OCI-LY7 (cell line): ENCODE measurements at regions of chr12 and their contacts with region 1.

Region 1: DNA sequence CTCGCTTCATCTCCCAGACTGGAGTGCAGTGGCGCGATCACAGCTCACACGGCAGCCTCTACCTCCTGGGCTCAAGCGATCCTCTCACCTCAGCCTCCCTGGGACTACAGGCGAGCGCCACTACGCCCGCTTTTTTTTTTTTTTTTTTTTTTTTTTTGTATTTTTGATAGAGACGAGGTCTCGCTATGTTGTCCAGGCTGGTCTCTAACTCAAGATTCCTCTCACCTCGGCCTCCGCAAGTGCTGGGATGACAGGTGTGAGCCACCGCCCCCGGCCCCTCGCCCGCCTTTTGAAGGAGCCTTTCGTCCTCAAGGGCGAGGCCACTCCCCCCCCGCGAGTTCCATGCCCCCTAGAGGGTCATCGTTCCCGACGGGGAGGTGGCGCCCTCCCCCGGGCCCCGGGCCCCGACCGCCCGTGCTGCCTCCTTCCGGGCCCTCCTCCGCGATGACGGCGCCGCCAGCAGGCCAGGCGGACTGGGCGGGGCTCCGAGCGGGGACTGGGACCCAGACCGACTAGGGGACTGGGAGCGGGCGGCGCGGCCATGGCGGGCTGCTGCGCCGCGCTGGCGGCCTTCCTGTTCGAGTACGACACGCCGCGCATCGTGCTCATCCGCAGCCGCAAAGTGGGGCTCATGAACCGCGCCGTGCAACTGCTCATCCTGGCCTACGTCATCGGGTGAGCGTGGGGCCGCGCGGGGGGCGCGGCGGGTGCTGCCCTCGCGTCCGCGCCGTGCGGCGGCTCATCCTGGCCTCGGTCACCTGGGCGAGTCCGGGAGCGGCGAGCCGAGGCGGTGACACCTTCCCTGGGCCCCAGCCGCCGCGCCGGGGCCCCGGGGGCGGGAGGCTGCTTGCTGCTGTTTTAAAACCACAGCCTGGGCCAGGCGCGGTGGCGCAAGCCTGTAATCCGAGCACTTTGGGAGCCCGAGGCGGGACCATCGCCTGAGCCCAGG is at the start of gene P2RX4:
- DNase-seq: peak; percentile 90
- H3K4me3 ChIP-seq: peak within 1 kb of the TSS; percentile 79
- H3K27ac ChIP-seq: peak within 1 kb of the TSS; percentile 45
- H3K4me1 ChIP-seq: peaks cover 10% of the 10 kb centered on the region
- CTCF ChIP-seq: peak; percentile 72
- total RNA-seq, gene P2RX4: 10.8 and 11.3 TPM in 2 replicates

Region 2: GRCh38 chr12:121110211-121110940 is 99.5 kb before region 1 on chr12:
- CTCF ChIA-PET with region 1: no interaction called
- POLR2A ChIA-PET with region 1: no interaction called
- intact Hi-C with region 1: loop called (anchors 5 kb)
- DNase-seq: peak; percentile 69
- H3K4me3 ChIP-seq: no peak overlapping the region
- H3K27ac ChIP-seq: no peak overlapping the region
- H3K4me1 ChIP-seq: no peaks in the 10 kb centered on the region
- CTCF ChIP-seq: peak; percentile 99